ENCODE measurements at regions of chr20 and their contacts with region 1.

Region 1: GRCh38 chr20:47196091-47197081 is 160.1 kb downstream of the ZMYND8 start:
- DNase-seq: peak; percentile 91
- ATAC-seq: peak; percentile 87
- H3K4me3 Mint-ChIP-seq: no peak overlapping the region
- H3K27ac Mint-ChIP-seq: no peak overlapping the region
- H3K4me1 Mint-ChIP-seq: 0 out of 2 replicates have a peak, but pooled peaks cover 2% of the 10 kb centered on the region
- H3K27me3 Mint-ChIP-seq: no peaks in the 10 kb centered on the region
- CTCF ChIP-seq: peak; percentile 99

Region 2: DNA sequence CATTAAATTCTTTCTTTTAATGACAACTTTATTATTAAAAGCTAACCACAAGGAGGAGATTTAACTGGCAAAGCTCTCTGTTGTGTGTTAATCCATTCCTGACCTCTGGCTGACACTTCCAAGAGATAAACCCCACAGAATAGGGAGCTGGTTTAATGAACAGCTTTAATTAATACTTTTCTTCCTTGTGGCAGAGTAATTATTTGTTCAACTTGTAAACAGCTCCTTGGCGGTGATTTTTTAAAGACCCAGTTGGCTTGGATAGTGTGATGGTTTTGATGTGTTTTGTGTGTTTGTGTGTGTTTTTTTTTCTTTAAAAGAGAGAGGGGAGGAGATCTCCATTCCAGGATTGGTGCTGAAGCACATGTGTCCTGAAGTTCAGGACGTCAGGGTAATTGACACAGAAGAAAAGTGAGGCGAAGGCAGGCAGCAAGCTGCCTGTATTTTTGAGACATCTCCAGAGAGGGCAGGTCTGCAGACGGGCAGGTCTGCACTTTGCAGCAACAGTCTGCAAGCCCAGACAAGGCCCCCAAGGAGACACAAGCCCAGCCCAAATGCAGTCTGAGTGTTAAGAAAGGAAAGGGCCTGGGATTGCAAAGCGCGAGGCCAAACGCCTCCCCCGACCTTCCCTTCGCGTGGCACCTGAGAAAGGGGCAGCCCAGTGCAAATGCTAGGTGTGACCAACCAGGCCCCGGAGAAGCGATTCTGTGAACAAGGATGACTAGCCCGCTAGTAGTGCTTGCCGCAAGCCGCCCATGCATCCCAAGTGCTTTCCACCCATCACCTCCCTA is 70.6 kb before region 1 on chr20:
- CTCF ChIA-PET with region 1: no interaction called
- POLR2A ChIA-PET with region 1: no interaction called
- DNase-seq: no peak
- ATAC-seq: peak; percentile 58
- H3K4me3 Mint-ChIP-seq: no peak overlapping the region
- H3K27ac Mint-ChIP-seq: peak overlapping the region; percentile 10
- H3K4me1 Mint-ChIP-seq: peaks cover 8% of the 10 kb centered on the region
- H3K27me3 Mint-ChIP-seq: no peaks in the 10 kb centered on the region
- CTCF ChIP-seq: no peak

Region 3: GRCh38 chr20:47220161-47220582 is 23.8 kb after region 1 on chr20:
- CTCF ChIA-PET with region 1: no interaction called
- POLR2A ChIA-PET with region 1: no interaction called
- DNase-seq: peak; percentile 67
- ATAC-seq: peak; percentile 73
- H3K4me3 Mint-ChIP-seq: no peak overlapping the region
- H3K27ac Mint-ChIP-seq: no peak overlapping the region
- H3K4me1 Mint-ChIP-seq: peaks cover 3% of the 10 kb centered on the region; the same call in 1 of the 2 replicates
- H3K27me3 Mint-ChIP-seq: no peaks in the 10 kb centered on the region
- CTCF ChIP-seq: peak; percentile 65; the same call in 1 of the 2 replicates

Region 4: GRCh38 chr20:47304287-47304686 is 107.9 kb after region 1 on chr20:
- CTCF ChIA-PET with region 1: no interaction called
- POLR2A ChIA-PET with region 1: no interaction called
- DNase-seq: no peak
- ATAC-seq: no peak; the same call in 1 of the 2 replicates
- H3K4me3 Mint-ChIP-seq: no peak overlapping the region
- H3K27ac Mint-ChIP-seq: peak overlapping the region; percentile 74; the same call in 1 of the 2 replicates
- H3K4me1 Mint-ChIP-seq: peaks cover 49% of the 10 kb centered on the region
- H3K27me3 Mint-ChIP-seq: no peaks in the 10 kb centered on the region
- CTCF ChIP-seq: no peak

Region 5: DNA sequence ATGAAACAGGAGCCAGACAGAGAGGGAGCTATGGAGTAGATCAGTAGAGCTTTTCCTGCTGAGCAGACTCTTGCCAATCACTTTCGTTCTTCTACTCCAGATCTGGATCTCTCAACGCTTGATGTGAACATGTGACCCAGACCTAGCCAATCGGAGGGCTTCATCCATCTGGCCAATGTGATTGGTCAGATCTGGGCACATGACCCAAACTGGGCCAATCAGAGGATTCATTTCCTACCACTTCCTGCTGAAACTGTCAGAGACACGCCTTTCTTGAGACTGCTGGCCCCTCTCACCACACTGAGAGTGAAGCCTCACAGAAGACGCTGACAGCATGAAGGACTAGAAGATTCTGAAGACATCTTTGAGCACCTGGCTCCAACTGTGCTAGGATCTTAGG is 204.3 kb after region 1 on chr20:
- CTCF ChIA-PET with region 1: interaction called, 12 read pairs
- POLR2A ChIA-PET with region 1: interaction called, 5 read pairs
- DNase-seq: no peak
- ATAC-seq: peak; percentile 59
- H3K4me3 Mint-ChIP-seq: no peak overlapping the region
- H3K27ac Mint-ChIP-seq: no peak overlapping the region
- H3K4me1 Mint-ChIP-seq: no peaks in the 10 kb centered on the region
- H3K27me3 Mint-ChIP-seq: no peaks in the 10 kb centered on the region
- CTCF ChIP-seq: no peak

Measured in WTC11 (cell line).